ENCODE measurements at regions of chr3 and their contacts with region 1.

Region 1: GRCh38 chr3:40169983-40170382 is 139.5 kb upstream of the EIF1B start:
- DNase-seq: no peak
- ATAC-seq: no peak
- H3K4me3 ChIP-seq: no peak overlapping the region
- H3K27ac ChIP-seq: no peak overlapping the region
- H3K4me1 ChIP-seq: peaks cover 6 to 11% of the 10 kb centered on the region in 2 donors
- H3K27me3 ChIP-seq: no peaks in the 10 kb centered on the region
- CTCF ChIP-seq: no peak
- POLR2A ChIP-seq: no peak

Region 2: GRCh38 chr3:39804951-39805350 is 365.0 kb before region 1 on chr3:
- in situ Hi-C with region 1: no loop called
- intact Hi-C with region 1: loop called (anchors 5 kb)
- DNase-seq: no peak
- ATAC-seq: no peak
- H3K4me3 ChIP-seq: no peak overlapping the region
- H3K27ac ChIP-seq: no peak overlapping the region
- H3K4me1 ChIP-seq: peaks cover under 1 to 3% of the 10 kb centered on the region in 2 donors
- H3K27me3 ChIP-seq: peaks cover 2 to 12% (median 2%) of the 10 kb centered on the region in 3 donors
- CTCF ChIP-seq: no peak
- POLR2A ChIP-seq: no peak

Region 3: DNA sequence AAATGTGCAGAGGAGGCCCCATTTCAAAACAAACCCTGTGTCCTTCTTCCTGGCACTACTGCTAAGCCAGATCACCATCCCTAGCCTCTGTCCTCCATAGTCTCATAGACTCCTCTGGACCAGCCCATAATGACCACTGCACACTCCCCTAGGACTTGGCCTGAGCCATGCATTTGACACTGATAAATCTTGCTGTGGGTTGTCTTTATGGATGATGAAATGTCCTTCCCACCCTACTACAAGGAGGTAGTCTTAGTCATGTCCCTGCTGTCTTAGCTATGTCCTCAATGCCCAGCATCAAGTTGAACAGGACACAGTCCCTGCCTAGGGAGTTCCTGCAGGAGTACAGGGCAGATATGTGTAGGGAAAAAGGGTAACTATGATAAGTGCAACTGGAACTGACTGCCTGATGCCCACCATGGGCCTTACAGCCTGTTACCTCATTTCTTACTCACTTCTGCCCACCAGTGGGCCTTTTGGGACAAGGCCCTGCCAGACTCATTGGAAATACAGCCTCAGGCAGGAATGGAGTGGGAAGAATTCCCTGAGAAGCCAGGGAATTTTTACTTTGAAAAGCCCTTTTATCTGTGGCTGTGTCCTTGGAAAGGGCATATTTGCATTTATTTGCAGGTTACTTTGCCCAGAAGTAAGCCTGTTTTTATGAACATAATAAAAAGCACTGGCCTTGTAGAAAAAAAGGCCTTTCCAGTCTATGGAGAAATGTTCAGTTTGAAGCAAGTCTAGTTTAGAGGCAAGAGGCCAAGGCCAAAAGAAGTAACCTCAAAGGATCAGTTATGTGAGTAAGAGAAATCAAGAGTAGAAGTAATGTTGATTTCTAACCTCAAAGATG is 60.1 kb before region 1 on chr3:
- in situ Hi-C with region 1: no loop called
- intact Hi-C with region 1: no loop called
- DNase-seq: no peak
- ATAC-seq: no peak
- H3K4me3 ChIP-seq: no peak overlapping the region
- H3K27ac ChIP-seq: no peak overlapping the region
- H3K4me1 ChIP-seq: no peaks in the 10 kb centered on the region
- H3K27me3 ChIP-seq: no peaks in the 10 kb centered on the region
- CTCF ChIP-seq: no peak
- POLR2A ChIP-seq: no peak